ENCODE measurements at regions of chr1 and their contacts with region 1.

Region 1: GRCh38 chr1:227482023-227482299 is 81.4 kb upstream of the ZNF678 start:
- DNase-seq: no peak
- H3K27ac ChIP-seq: no peak overlapping the region
- CTCF ChIP-seq: no peak

Region 2: DNA sequence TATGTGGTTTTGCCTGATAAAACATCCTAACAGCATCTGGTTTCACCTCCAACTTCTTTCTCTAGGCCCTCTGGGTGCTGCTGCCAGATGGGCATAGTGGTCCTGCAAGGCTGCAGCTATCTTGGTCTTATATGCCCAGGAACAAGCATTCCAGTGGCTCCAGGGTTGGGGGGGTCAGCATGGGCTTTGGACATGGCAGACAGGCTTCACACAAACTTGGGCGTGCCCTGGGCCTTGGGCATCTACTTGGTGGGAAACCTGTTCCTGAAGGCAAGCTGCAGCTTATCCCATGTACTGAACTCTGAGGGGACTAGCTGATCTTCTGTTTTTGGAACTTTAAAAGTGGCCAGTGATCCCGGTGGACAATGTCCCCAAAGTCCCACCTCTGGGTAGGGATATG is 26.5 kb after region 1 on chr1:
- CTCF ChIA-PET with region 1: no interaction called
- POLR2A ChIA-PET with region 1: no interaction called
- DNase-seq: no peak
- H3K27ac ChIP-seq: no peak overlapping the region
- CTCF ChIP-seq: no peak

Region 3: DNA sequence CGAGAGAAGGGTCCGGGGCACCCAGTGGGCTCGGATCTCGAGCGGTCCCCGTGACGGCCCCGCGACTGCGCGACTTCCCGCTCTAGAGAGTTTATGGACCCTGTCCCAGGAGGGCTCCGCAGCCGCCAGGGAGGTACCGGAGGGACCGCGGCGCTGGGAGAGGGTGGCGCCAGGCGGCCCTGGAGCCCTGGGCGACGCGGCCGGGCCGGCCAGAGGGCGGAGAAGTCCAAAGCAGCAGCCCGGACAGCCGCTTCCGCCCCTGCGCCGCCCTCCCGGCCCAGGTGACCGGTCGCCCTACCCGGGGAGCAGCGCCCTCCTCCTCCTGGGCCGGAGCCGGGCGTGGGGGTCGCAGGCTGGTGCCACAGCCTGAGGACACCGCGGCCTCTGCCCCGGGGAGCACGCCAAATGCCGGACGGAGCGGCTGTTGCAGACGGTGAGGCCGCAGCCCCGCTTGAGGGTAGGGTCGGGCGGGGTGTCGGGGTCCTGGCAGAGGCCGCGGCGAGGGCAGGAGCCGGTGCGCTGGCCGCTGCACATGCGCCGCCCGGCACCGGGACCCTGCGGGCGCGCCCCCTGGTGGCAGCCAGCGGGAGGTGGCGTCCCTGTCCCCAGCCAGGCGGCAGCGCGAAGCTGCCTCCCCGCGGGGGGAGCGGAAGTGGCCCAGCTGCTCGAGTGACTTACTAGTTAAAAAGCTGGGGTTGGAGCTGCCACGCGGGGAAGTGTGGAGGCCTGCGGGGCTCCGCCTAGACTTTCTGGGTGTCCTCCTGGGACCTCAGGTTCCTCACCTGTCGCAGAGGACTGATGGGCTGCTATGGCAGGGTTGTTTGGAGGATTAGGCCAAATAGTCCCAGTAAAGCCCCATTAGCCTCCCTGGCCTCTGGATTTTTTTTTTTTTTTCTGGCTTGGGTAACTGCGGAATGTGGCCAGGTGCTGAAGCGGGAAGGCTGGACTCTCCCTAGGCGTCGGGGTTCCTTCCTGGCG is 60.5 kb after region 1 on chr1:
- CTCF ChIA-PET with region 1: interaction called, 16 read pairs
- POLR2A ChIA-PET with region 1: no interaction called
- DNase-seq: peak; percentile 86
- H3K27ac ChIP-seq: peak overlapping the region; percentile 38
- CTCF ChIP-seq: peak; percentile 93